HepG2 (cell line): ENCODE measurements at regions of chr15 and their contacts with region 1.

Region 1: DNA sequence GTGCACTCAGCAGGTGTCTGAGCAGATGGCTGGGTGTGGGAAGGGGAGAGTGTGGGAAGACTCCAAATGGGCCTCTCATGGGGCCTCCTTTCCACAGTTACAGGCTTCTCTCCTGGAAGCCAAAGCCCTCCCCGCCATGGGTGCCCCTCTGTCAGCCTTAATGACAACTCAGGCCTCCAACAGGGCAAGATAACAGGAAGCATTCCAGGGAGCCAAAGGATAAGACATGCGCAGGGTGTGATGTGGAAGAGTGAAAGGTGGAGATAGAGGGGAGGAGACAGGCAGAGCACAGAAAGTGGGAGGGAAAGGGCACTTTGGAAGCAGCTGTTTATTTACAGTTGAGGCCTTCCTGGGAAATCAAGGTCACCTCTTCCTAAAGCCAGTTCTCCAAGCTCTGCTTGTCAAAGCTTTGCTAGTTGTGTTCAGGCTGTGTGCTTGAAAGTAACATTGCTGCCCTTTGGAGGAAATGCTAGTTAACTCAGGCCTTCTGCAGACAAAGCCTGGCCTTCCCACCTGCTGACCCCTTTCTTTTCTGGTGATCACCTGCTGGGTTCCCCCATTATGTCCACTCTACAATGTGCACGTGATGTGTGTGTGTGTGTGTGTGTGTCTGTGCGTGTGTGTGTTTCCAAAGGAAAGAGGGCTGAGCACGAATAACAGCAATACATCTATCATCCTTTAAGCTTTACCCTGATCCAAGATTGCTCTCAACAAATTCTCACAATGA is 35.2 kb upstream of the SMAD3 start:
- DNase-seq: peak; percentile 82
- ATAC-seq: peak; percentile 89
- H3K4me3 ChIP-seq: peak overlapping the region in 1 of 3 experiments; percentile 14; a peak in 1 of 6 replicates
- H3K27ac ChIP-seq: peak overlapping the region; percentile 49
- H3K4me1 ChIP-seq: peaks cover 59% of the 10 kb centered on the region
- H3K27me3 ChIP-seq: no peaks in the 10 kb centered on the region
- CTCF ChIP-seq: no peak
- EP300 ChIP-seq: peak in 1 of 2 experiments; percentile 61; a peak in 1 of 4 replicates
- POLR2A ChIP-seq: no peak
- RAD21 ChIP-seq: no peak

Region 2: DNA sequence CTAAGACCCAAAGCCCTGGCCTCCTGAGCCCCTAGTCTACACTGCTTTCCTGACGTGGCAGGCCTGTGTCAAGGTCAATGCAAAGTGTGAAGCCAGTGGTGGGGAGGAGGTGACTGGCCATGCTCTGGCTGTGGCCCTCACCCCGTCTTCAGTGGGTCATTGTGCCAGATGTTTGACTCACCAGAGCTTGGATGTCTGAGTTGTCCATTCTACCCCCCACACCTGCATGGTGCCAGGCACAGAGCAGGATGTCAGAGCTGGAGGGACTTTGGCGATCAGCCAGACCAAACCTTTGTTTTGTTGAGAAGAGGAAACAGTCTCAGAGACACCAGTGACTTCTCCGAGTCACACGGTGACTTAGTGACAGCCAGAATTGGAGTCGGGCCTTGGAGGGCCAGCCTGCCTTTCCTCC is 278.7 kb before region 1 on chr15:
- CTCF ChIA-PET with region 1: no interaction called
- POLR2A ChIA-PET with region 1: no interaction called
- in situ Hi-C with region 1: no loop called
- intact Hi-C with region 1: no loop called
- DNase-seq: peak; percentile 60
- ATAC-seq: peak; percentile 37; the same call in 2 of the 3 replicates
- H3K4me3 ChIP-seq: no peak overlapping the region
- H3K27ac ChIP-seq: no peak overlapping the region
- H3K4me1 ChIP-seq: peaks cover 57% of the 10 kb centered on the region
- H3K27me3 ChIP-seq: no peaks in the 10 kb centered on the region
- CTCF ChIP-seq: no peak
- EP300 ChIP-seq: no peak
- POLR2A ChIP-seq: no peak
- RAD21 ChIP-seq: no peak

Region 3: DNA sequence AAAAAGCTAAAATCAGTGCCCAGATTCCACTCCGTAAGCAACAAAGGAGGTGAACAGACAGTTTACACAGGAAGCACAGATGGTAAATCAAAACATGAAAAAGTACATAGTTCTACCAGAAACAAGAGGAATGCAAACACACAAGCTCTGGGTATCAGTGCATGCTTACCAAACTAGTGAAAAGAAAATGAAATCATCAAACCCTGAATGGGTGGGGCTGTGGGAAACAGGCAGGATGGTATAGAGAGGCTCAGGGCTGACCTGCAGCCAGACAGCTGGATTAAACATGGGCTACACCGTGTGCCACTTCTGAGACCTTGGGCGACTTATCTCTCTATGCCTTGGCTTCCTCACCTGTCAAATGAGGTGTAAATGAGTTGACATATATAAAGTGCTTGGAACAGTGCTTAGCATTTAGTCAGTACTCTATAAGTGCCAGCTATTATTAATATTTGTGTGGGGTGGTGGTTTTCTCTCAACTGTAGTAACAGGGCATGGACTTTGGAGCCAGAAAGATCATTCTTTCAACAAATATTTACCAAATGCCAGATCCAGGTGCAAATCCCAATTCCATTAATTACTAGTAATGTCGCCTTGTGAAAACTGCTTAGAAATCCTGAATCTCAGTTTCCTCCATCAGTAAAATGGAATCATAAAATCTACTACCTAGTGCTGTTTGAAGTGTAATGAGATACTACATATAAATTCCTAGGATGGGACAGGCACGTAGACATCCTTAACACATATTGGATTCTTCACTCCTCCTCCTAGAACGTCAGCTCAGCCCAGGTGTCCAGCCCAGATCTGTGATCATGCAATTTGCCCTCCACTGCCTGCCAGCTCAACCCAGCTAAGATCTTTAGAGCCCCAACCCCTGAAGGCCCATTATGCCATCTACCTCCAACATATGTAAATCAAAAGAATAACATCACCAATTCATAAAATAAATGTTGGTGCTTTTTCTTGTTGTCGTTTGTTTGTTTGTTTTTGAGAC is 20.3 kb before region 1 on chr15:
- CTCF ChIA-PET with region 1: no interaction called
- POLR2A ChIA-PET with region 1: interaction called, 12 read pairs
- in situ Hi-C with region 1: no loop called
- intact Hi-C with region 1: no loop called
- DNase-seq: peak; percentile 33
- ATAC-seq: peak; percentile 62
- H3K4me3 ChIP-seq: no peak overlapping the region; a peak in 2 of 6 replicates
- H3K27ac ChIP-seq: no peak overlapping the region
- H3K4me1 ChIP-seq: peaks cover 32% of the 10 kb centered on the region
- H3K27me3 ChIP-seq: no peaks in the 10 kb centered on the region
- CTCF ChIP-seq: no peak
- EP300 ChIP-seq: no peak
- POLR2A ChIP-seq: no peak
- RAD21 ChIP-seq: no peak

Region 4: DNA sequence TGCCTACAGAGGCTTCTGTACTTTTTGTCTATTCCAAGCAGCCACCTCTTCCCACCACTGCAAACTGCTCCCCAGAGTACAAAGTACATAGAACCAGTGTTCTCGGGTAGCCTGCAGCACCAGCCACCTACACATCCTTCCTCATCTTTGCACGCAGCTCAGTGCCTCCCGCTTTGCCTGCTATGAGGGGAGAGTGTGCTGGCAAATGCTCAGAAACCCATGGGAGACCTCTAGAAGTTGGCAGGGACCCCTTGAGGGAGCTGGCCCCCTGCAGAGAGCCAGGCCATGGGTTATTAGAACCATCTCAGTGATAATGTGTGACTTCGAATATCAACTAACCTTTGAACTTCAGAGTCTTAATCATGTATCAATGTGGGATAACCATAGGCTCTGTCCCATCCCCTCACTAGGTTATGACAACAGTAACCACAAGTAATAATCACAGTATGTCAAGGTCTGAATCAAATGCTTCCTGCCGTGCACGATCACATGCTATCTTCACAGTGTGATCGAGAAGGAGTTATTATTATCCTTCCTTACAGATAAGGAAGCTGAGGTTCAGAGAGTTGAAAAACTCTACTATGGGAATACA is 12.4 kb after region 1 on chr15:
- CTCF ChIA-PET with region 1: no interaction called
- POLR2A ChIA-PET with region 1: interaction called, 36 read pairs
- in situ Hi-C with region 1: no loop called
- intact Hi-C with region 1: no loop called
- DNase-seq: no peak
- ATAC-seq: peak; percentile 57
- H3K4me3 ChIP-seq: no peak overlapping the region
- H3K27ac ChIP-seq: no peak overlapping the region
- H3K4me1 ChIP-seq: no peaks in the 10 kb centered on the region; the same call in none of the 2 replicates
- H3K27me3 ChIP-seq: no peaks in the 10 kb centered on the region
- CTCF ChIP-seq: no peak
- EP300 ChIP-seq: no peak
- POLR2A ChIP-seq: no peak
- RAD21 ChIP-seq: no peak

Region 5: GRCh38 chr15:67048281-67049279 is 18.4 kb after region 1 on chr15:
- CTCF ChIA-PET with region 1: no interaction called
- POLR2A ChIA-PET with region 1: interaction called, 36 read pairs
- in situ Hi-C with region 1: no loop called
- intact Hi-C with region 1: no loop called
- DNase-seq: peak; percentile 97
- ATAC-seq: peak; percentile 91
- H3K4me3 ChIP-seq: peak overlapping the region; percentile 6 to 56 (median 36); a peak in 5 of 6 replicates
- H3K27ac ChIP-seq: peak overlapping the region; percentile 100
- H3K4me1 ChIP-seq: peaks cover 6% of the 10 kb centered on the region
- H3K27me3 ChIP-seq: no peaks in the 10 kb centered on the region
- CTCF ChIP-seq: no peak
- EP300 ChIP-seq: peak; percentile 77 to 86
- POLR2A ChIP-seq: peak in 1 of 2 experiments; percentile 88; a peak in 2 of 4 replicates
- RAD21 ChIP-seq: peak; percentile 23; the same call in 1 of the 2 replicates